BJ (cell line): ENCODE measurements at regions of chr12 and their contacts with region 1.

Region 1: DNA sequence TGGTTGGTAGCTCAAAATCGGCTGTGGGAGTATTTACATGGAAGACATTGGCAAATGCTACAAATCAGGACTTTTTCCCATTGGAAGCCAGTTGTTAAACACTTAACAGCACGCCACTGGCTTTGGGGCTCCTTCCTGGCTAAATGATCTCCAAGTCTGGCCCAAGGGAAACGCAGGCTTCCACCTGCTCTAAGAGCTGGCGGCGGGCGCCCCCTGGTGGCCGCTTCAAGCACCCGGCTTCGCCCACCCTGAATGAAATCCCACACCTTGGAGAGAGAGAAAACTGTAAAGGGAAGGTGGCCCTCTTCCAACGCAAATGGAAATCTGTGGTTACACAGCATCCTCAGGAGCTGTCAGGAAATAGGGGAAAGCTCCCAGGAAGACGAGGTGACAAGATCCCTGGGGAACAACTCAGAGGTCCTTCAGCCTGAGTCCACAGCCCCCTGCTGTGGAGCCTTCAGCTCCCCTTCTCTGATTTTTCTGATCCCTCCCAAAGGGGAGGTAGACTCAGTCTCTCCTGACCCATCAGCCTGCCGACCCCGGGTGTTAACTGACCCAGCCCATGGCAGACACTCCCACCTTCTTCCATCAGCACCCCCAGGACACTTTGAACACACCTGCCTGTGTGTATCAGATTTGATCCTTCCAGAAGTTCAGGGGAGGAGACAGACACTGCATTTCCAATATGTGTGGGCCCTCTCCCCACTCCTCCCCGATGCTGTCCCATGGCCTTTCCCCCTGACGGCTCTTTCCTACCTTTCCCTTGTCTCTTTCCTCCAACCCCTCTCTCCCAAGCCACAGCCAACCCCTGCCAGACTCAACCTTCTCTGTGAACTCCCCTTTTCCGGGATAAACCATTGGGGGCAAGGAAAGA is 15.4 kb downstream of the SELPLG start:
- DNase-seq: no peak
- H3K4me3 ChIP-seq: no peak overlapping the region
- H3K27me3 ChIP-seq: no peaks in the 10 kb centered on the region
- CTCF ChIP-seq: peak; percentile 97

Region 2: DNA sequence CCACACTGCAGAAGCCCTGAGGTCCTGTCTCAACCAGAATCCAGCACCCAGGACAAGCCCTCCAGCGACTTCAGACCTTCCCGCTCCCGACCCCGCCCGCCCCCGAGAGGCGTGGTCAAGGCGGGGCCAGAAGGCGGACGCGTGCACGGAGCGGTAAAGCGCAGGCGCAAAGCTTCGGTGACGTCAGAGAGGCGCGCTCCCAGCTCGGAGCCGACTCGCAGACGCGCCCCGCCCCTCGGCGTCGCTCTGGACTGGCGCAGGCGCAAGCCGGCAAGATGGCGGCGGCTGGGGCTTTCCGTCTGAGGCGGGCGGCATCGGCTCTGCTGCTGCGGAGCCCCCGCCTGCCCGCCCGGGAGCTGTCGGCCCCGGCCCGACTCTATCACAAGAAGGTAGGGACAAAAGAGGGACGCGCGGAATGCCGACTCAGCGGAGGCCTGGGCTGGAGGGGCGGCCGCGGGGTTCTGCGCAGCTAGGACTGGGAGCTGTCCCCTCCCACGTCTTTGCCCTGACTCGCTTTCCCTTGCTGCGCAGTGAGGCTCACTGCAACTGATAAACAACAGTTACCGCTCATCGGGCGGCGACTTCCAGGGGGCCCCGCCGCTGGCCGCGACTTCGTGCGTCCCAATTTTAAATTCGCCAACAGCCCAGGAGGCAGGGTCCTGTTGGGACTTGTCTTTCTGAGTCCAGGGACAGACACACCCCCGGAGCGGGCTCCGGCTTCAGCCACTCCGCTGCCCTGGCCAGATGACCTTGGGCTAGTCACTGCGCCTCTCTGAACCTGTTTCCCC is 55.8 kb before region 1 on chr12 and contains the start of gene ISCU:
- CTCF ChIA-PET with region 1: interaction called, 460 read pairs
- POLR2A ChIA-PET with region 1: no interaction called
- DNase-seq: peak; percentile 70
- H3K4me3 ChIP-seq: peak within 1 kb of the TSS; percentile 94
- H3K27me3 ChIP-seq: no peaks in the 10 kb centered on the region
- CTCF ChIP-seq: no peak
- polyA plus RNA-seq, gene ISCU: 125 and 169 TPM in 2 replicates

Region 3: GRCh38 chr12:108596854-108597558 is 21.3 kb before region 1 on chr12:
- CTCF ChIA-PET with region 1: interaction called, 16 read pairs
- POLR2A ChIA-PET with region 1: no interaction called
- DNase-seq: no peak
- H3K4me3 ChIP-seq: peak overlapping the region; percentile 62
- H3K27me3 ChIP-seq: no peaks in the 10 kb centered on the region
- CTCF ChIP-seq: no peak

Region 4: DNA sequence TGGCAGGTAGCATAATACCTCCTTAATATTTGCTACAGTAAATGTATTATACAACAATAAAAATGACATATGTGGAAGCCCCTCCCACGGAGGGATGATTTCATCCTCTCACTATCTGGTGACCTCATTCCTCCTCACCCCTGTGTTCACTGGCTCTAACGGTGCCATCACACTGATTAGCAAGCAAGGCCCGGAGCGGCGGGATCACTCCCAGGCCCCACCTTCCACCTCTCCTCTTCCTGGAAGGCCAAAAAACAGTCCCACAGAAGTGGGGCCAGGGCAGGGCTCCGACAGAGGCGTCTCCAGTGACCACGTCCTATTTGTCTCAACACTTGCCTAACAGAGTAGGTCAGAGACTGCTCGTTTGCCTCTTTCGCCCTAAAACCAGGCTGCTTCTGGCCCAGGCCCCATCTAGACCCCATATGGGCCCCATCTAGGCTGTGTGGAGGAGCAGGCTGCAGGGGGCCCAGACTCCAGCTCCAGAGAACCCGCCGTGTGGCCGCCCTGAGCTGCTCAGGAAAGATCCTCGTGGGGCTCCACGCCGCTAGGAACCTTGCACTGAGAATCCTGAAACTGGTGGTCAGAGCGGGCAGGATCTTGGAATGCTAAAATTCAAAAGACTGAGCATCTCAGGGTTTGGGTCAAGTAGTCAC is 11.6 kb after region 1 on chr12:
- CTCF ChIA-PET with region 1: interaction called, 40 read pairs
- POLR2A ChIA-PET with region 1: no interaction called
- DNase-seq: peak; percentile 53
- H3K4me3 ChIP-seq: no peak overlapping the region
- H3K27me3 ChIP-seq: no peaks in the 10 kb centered on the region
- CTCF ChIP-seq: no peak